Panc1 (cell line): ENCODE measurements at regions of chr12 and their contacts with region 1.

Region 1: DNA sequence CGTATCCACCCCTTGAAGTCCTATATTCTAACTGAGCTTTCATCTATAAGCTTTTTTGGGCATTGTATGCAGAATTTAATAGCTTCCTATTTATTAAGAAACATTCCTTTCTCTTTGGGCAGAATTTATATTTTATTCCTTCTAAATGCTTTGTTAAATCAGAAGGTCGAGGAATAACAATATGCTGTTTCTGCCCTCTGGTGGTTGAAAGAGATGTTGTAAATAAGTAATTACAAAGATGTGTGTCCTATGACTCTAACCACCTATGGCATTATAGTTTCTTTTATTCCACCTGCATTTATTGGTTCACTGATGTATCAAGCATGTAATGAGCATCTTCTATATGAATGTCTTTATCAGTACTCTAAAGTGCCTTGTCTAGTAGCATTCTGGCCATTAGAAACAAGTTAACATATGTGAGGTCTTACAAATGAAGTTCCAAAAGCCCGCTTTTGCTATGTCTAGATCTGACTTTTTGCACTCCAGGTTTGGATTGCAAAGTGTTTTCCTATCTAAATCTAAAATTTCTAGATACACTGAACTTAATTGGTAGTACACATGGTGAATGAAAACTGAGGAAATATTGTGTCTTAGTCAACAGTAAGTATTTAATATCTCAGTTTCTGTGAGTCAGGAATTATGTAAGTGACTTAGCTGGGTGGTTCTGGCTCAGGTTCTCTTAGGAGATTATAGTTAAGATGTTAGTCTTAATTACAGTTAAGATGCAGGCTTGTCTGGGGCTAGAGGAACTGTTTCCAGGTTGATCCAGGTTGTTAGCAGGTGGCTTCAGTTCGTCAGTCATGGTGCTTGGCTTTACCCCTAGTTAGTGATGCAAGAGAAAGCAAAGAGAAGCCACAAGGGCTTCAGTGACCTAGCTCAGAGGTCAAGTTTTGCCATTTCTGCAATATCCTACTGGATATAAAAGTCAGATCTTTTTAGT is 57.5 kb downstream of the PLEKHA5 start:
- DNase-seq: peak; percentile 35
- ATAC-seq: no peak
- H3K4me3 ChIP-seq: no peak overlapping the region
- H3K27ac ChIP-seq: no peak overlapping the region
- H3K4me1 ChIP-seq: no peaks in the 10 kb centered on the region
- H3K27me3 ChIP-seq: no peaks in the 10 kb centered on the region
- CTCF ChIP-seq: peak; percentile 51; the same call in 1 of the 2 replicates

Region 2: GRCh38 chr12:18250313-18250916 is 936.6 kb before region 1 on chr12:
- CTCF ChIA-PET with region 1: interaction called, 4 read pairs
- POLR2A ChIA-PET with region 1: no interaction called
- in situ Hi-C with region 1: no loop called
- intact Hi-C with region 1: loop called (anchors 5 kb)
- DNase-seq: peak; percentile 10
- ATAC-seq: no peak
- H3K4me3 ChIP-seq: no peak overlapping the region
- H3K27ac ChIP-seq: no peak overlapping the region
- H3K4me1 ChIP-seq: no peaks in the 10 kb centered on the region
- H3K27me3 ChIP-seq: no peaks in the 10 kb centered on the region
- CTCF ChIP-seq: peak; percentile 58; the same call in 1 of the 2 replicates

Region 3: GRCh38 chr12:18861287-18861858 is 325.6 kb before region 1 on chr12:
- CTCF ChIA-PET with region 1: no interaction called
- POLR2A ChIA-PET with region 1: no interaction called
- in situ Hi-C with region 1: no loop called
- intact Hi-C with region 1: loop called (anchors 5 kb)
- DNase-seq: no peak
- ATAC-seq: no peak
- H3K4me3 ChIP-seq: no peak overlapping the region
- H3K27ac ChIP-seq: no peak overlapping the region
- H3K4me1 ChIP-seq: no peaks in the 10 kb centered on the region
- H3K27me3 ChIP-seq: no peaks in the 10 kb centered on the region
- CTCF ChIP-seq: peak; percentile 18; the same call in 1 of the 2 replicates

Region 4: GRCh38 chr12:19474147-19474546 is 287.2 kb after region 1 on chr12:
- CTCF ChIA-PET with region 1: no interaction called
- POLR2A ChIA-PET with region 1: no interaction called
- in situ Hi-C with region 1: no loop called
- intact Hi-C with region 1: no loop called
- DNase-seq: no peak
- ATAC-seq: no peak
- H3K4me3 ChIP-seq: no peak overlapping the region
- H3K27ac ChIP-seq: no peak overlapping the region
- H3K4me1 ChIP-seq: no peaks in the 10 kb centered on the region
- H3K27me3 ChIP-seq: no peaks in the 10 kb centered on the region
- CTCF ChIP-seq: no peak